ENCODE measurements at regions of chr17 and their contacts with region 1.

Region 1: DNA sequence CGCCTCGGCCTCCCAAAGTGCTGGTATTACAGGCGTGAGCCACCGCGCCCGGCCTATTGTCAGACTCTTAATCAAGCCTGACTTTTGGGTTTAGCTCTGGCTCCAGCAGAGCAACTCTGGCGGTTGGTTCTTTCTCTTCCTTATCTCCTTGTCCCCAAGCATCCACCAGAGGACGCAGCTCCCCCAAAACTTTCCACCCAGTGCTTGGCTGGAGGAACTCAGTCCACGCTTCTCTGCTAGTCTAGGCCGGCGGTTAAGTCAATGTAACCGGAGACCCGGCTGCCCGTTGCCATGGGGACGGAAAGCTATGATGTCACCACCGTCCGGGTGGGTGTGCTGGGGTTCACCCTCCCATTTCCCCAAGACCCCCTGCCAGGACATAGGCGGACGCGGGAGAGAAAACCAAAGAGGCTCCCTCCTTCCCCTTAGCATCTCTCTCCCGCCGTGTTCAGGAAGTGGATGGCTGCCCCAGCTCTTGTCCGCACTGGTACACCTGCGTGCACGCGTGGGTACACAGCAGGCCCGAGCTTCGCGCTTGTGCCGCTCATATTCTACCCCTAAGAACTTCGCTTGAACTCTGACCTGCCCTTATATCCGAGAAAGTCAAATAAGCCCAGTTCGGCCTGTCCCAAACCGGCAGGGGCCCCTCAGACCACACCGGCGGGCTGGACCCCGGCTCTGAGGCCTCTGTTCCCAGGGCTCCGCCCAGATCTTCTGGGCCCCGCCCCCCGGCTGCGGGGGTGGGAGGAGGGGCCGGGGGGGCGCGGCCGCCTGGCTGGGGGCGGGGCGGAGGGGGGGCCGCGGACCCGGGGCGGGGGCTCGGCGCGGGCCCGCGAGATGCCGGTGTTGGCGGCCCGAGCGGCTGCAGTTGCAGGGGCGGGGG is at the start of gene RND2:
- DNase-seq: peak; percentile 94
- ATAC-seq: peak; percentile 65
- H3K4me3 Mint-ChIP-seq: peak within 1 kb of the TSS; percentile 85
- H3K27ac Mint-ChIP-seq: peak within 1 kb of the TSS; percentile 94
- H3K4me1 Mint-ChIP-seq: peaks cover 48% of the 10 kb centered on the region
- H3K27me3 Mint-ChIP-seq: peaks cover 3% of the 10 kb centered on the region; the same call in 1 of the 2 replicates
- CTCF ChIP-seq: no peak
- total RNA-seq, gene RND2: 46.9 to 51.8 TPM (median 50.2 TPM) in 3 replicates

Region 2: GRCh38 chr17:42866631-42867575 is 157.7 kb before region 1 on chr17:
- CTCF ChIA-PET with region 1: no interaction called
- POLR2A ChIA-PET with region 1: no interaction called
- DNase-seq: no peak
- ATAC-seq: peak; percentile 30; the same call in 1 of the 2 replicates
- H3K4me3 Mint-ChIP-seq: no peak overlapping the region
- H3K27ac Mint-ChIP-seq: no peak overlapping the region
- H3K4me1 Mint-ChIP-seq: peaks cover 18% of the 10 kb centered on the region
- H3K27me3 Mint-ChIP-seq: peaks cover 9% of the 10 kb centered on the region
- CTCF ChIP-seq: no peak

Region 3: DNA sequence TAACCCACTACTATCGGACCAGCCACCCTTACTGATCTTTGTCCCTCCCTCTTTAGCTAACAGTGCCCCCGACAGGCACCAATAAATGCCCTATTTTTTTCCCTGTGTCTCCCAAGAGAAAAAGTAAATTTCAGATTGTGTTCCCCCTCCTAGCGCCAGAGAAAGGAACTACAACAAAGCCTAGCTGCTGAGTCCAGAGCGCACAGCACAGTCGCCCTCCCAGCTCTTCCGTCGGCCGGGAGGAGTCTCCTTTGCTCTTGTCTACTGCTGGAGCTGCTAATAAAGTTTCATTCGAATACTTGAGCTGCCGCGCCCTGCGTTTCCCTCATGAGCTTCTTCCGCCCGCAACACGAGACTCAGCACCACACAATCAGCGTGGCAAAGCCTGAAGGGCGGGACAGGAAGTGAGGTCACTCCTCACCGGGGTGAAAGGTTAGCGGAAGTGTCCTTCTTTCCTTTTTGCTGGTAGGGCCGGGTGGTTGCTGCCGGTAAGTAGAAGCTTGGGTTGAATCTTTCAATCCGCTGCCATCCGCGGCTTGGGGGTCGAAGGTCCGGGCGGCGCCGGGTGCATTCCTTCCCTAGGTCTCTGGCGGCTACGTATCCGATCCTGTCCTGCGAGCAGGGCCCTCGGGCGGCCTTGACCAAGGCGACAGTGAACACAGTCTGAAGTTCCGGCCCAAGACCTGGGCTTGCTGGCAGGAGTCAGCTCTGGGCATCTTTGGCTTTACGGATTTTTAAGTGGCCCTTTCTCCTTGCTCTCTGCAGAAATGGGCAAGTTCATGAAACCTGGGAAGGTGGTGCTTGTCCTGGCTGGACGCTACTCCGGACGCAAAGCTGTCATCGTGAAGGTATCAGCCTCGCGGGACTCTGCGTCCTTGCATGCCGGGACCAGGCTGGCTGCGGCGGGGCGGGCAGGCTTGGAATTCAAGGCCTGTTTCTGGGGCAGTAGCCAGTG is 26.4 kb before region 1 on chr17 and contains the start of gene RPL27:
- CTCF ChIA-PET with region 1: interaction called, 28 read pairs
- POLR2A ChIA-PET with region 1: interaction called, 27 read pairs
- DNase-seq: peak; percentile 96
- ATAC-seq: peak; percentile 96
- H3K4me3 Mint-ChIP-seq: peak within 1 kb of the TSS; percentile 100
- H3K27ac Mint-ChIP-seq: peak within 1 kb of the TSS; percentile 99
- H3K4me1 Mint-ChIP-seq: peaks cover 31% of the 10 kb centered on the region
- H3K27me3 Mint-ChIP-seq: no peaks in the 10 kb centered on the region; the same call in 1 of the 2 replicates
- CTCF ChIP-seq: peak; percentile 77
- total RNA-seq, gene RPL27: 1,391 to 1,553 TPM (median 1,518 TPM) in 3 replicates

Region 4: GRCh38 chr17:43068570-43069367 is 44.1 kb after region 1 on chr17:
- CTCF ChIA-PET with region 1: interaction called, 16 read pairs
- POLR2A ChIA-PET with region 1: interaction called, 3 read pairs
- DNase-seq: no peak
- ATAC-seq: no peak
- H3K4me3 Mint-ChIP-seq: no peak overlapping the region
- H3K27ac Mint-ChIP-seq: peak overlapping the region; percentile 85
- H3K4me1 Mint-ChIP-seq: peaks cover 15% of the 10 kb centered on the region
- H3K27me3 Mint-ChIP-seq: no peaks in the 10 kb centered on the region
- CTCF ChIP-seq: no peak

Region 5: GRCh38 chr17:43125133-43125966 is 100.7 kb after region 1 on chr17 and contains the start of gene BRCA1:
- CTCF ChIA-PET with region 1: interaction called, 18 read pairs
- POLR2A ChIA-PET with region 1: interaction called, 8 read pairs
- DNase-seq: peak; percentile 93
- ATAC-seq: peak; percentile 98
- H3K4me3 Mint-ChIP-seq: peak within 1 kb of the TSS; percentile 98
- H3K27ac Mint-ChIP-seq: peak within 1 kb of the TSS; percentile 99
- H3K4me1 Mint-ChIP-seq: peaks cover 9% of the 10 kb centered on the region
- H3K27me3 Mint-ChIP-seq: no peaks in the 10 kb centered on the region
- CTCF ChIP-seq: no peak
- total RNA-seq, gene BRCA1: 37.8 to 38.4 TPM (median 38.1 TPM) in 3 replicates

Region 6: DNA sequence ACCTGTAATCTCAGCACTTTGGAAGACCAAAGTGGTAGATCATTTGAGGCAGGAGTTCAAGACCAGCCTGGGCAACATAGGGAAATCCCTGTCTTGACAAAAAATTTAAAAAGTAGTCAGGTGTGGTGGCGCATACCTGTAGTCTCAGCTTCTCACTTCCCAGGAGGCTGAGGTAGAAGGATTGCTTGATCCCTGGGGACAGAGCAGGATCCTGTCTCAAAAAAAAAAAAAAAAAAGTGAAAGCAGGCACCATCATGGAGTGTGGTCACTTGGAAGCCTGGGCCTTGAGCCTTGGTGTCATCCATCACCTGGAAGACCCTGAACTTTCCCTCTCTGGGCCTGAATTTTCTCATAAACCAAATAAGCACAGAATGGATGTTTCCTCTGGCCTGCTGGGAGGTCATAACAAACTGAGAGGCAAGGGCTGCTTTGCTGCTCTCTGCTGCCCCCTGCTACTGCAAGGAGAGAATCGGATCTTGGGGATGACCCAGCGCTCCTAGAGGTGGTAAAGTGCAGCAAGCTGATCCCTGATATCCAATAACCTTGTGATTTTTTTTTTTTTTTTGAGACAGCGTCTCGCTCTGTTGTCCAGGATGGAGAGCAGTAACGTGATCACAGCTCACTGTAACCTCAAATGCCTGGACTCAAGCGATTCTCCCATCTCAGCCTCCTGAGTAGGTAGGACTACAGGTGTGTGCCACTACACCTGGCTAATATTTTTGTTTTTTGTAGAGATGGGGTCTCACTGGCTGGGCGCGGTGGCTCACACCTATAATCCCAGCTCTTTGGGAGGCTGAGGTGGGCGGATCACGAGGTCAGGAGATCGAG is 285.1 kb after region 1 on chr17:
- CTCF ChIA-PET with region 1: interaction called, 16 read pairs
- POLR2A ChIA-PET with region 1: interaction called, 3 read pairs
- DNase-seq: no peak
- ATAC-seq: no peak
- H3K4me3 Mint-ChIP-seq: no peak overlapping the region
- H3K27ac Mint-ChIP-seq: no peak overlapping the region
- H3K4me1 Mint-ChIP-seq: no peaks in the 10 kb centered on the region; the same call in 1 of the 2 replicates
- H3K27me3 Mint-ChIP-seq: peaks cover 2% of the 10 kb centered on the region; the same call in 1 of the 2 replicates
- CTCF ChIP-seq: no peak